Activated CD4-positive, alpha-beta T cell treated with anti-CD3 and anti-CD28 coated beads, Interleukin-2, amount 10 ng/mL, durations not matched to agents 24 days and 14 days (primary cell): ENCODE measurements at regions of chr3 and their contacts with region 1.

Region 1: GRCh38 chr3:138513090-138513843 is 78.9 kb downstream of the ESYT3 start:
- DNase-seq: peak; percentile 73
- H3K4me3 Mint-ChIP-seq: peak overlapping the region; percentile 37
- H3K27ac Mint-ChIP-seq: peak overlapping the region; percentile 80
- H3K4me1 Mint-ChIP-seq: peaks cover 24% of the 10 kb centered on the region
- H3K27me3 Mint-ChIP-seq: no peaks in the 10 kb centered on the region

Region 2: DNA sequence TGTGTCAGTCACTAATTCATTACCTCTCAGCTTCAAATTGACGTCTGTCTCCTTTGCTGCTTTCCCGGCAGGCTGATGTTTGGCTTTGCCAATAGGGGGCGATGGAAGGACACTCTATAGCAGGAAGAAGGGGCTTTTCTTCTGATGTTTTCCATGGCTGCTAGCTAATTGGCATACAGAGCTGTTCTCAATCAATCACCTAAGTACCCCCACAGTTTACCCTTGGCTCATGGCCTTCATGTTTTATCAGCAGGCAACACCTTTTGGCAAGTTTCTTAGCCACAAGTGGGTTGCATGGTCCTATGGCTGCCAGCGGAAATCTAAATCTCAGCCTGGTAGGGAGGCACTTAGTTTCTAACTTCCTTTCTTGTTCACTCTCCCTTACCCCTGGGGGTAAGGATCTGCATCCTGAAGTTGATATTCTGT is 33.8 kb before region 1 on chr3:
- intact Hi-C with region 1: no loop called
- DNase-seq: peak; percentile 79
- H3K4me3 Mint-ChIP-seq: no peak overlapping the region
- H3K27ac Mint-ChIP-seq: no peak overlapping the region
- H3K4me1 Mint-ChIP-seq: no peaks in the 10 kb centered on the region
- H3K27me3 Mint-ChIP-seq: peaks cover 14% of the 10 kb centered on the region

Region 3: GRCh38 chr3:138547342-138547975 is 34.2 kb after region 1 on chr3:
- intact Hi-C with region 1: no loop called
- DNase-seq: no peak
- H3K4me3 Mint-ChIP-seq: no peak overlapping the region
- H3K27ac Mint-ChIP-seq: no peak overlapping the region
- H3K4me1 Mint-ChIP-seq: peaks cover 8% of the 10 kb centered on the region
- H3K27me3 Mint-ChIP-seq: no peaks in the 10 kb centered on the region

Region 4: GRCh38 chr3:138573138-138573537 is 59.9 kb after region 1 on chr3:
- intact Hi-C with region 1: loop called (anchors 5 kb)
- DNase-seq: no peak
- H3K4me3 Mint-ChIP-seq: no peak overlapping the region
- H3K27ac Mint-ChIP-seq: no peak overlapping the region
- H3K4me1 Mint-ChIP-seq: peaks cover 15% of the 10 kb centered on the region
- H3K27me3 Mint-ChIP-seq: no peaks in the 10 kb centered on the region